Endothelial cell of umbilical vein (primary cell): ENCODE measurements at regions of chr9 and their contacts with region 1.

Region 1: GRCh38 chr9:107700847-107701246 is 211.3 kb upstream of the KLF4 start:
- DNase-seq: no peak
- H3K4me3 ChIP-seq: no peak overlapping the region
- H3K27ac ChIP-seq: no peak overlapping the region
- H3K4me1 ChIP-seq: no peaks in the 10 kb centered on the region
- H3K27me3 ChIP-seq: peaks cover 2 to 6% of the 10 kb centered on the region in 2 experiments
- CTCF ChIP-seq: no peak
- POLR2A ChIP-seq: no peak

Region 2: DNA sequence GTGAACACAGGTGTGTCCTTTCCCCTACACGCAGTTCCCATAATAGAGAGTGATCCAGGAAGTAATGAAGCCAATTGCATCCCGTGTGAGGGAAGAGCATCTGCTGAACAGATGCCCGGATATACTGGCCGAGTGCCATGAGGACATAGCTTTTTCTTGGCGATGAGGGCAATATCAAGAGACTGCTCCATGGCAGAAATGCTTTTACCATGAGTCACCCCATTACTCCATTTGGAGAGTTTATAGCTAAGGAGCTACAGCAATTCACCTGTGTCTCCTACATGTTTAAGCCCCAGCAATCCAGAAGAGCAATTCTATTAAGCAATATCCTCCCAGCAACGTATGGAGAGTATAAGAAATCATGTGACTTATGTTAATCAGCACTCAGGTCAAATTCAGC is 10.7 kb after region 1 on chr9:
- CTCF ChIA-PET with region 1: no interaction called
- POLR2A ChIA-PET with region 1: no interaction called
- dilution Hi-C with region 1: no loop called
- intact Hi-C with region 1: no loop called
- DNase-seq: peak; percentile 80
- H3K4me3 ChIP-seq: no peak overlapping the region
- H3K27ac ChIP-seq: no peak overlapping the region
- H3K4me1 ChIP-seq: peaks cover 16% of the 10 kb centered on the region
- H3K27me3 ChIP-seq: peaks cover 14 to 26% of the 10 kb centered on the region in 2 experiments
- CTCF ChIP-seq: no peak
- POLR2A ChIP-seq: no peak

Region 3: DNA sequence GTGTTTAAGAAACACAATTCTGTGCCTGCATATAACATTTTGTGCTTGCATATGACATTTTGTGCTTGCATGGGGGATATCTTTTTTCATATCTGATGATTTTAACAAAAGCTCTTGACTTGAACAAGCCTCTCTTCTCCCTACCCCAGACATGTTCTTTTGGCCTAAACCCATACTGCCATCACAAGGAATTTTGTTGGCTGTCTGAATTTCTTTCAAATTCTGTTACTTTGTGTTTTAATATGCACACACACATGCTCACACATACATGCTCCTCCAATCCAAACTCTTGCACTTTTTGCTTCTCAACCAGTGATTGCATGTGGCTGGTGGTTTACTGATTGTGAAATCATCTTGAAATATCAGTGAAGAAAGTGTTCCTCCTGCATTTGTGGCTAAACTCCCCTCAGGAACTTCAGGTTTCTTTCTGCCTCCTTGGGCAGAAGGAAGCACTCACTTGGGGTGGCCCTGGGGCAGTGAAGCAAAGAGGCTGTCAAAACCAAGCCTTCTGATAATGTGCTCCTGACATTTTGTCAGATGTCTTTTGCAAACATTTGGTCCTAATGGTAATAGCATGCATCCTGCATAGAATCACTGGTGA is 166.0 kb after region 1 on chr9:
- CTCF ChIA-PET with region 1: no interaction called
- POLR2A ChIA-PET with region 1: no interaction called
- dilution Hi-C with region 1: no loop called
- intact Hi-C with region 1: loop called (anchors 5 kb)
- DNase-seq: no peak
- H3K4me3 ChIP-seq: no peak overlapping the region
- H3K27ac ChIP-seq: no peak overlapping the region
- H3K4me1 ChIP-seq: no peaks in the 10 kb centered on the region
- H3K27me3 ChIP-seq: no peaks in the 10 kb centered on the region
- CTCF ChIP-seq: no peak
- POLR2A ChIP-seq: no peak